ENCODE measurements at regions of chr4 and their contacts with region 1.

Region 1: GRCh38 chr4:38179690-38180377 is 219.6 kb downstream of the PTTG2 start:
- DNase-seq: peak; percentile 76
- H3K4me3 Mint-ChIP-seq: no peak overlapping the region
- H3K27ac Mint-ChIP-seq: no peak overlapping the region
- H3K4me1 Mint-ChIP-seq: peaks cover 38% of the 10 kb centered on the region
- H3K27me3 Mint-ChIP-seq: peaks cover 42% of the 10 kb centered on the region

Region 2: GRCh38 chr4:38062088-38062893 is 117.5 kb before region 1 on chr4:
- CTCF ChIA-PET with region 1: interaction called, 98 read pairs
- POLR2A ChIA-PET with region 1: interaction called, 3 read pairs
- DNase-seq: peak; percentile 72
- H3K4me3 Mint-ChIP-seq: peak overlapping the region; percentile 64
- H3K27ac Mint-ChIP-seq: peak overlapping the region; percentile 10
- H3K4me1 Mint-ChIP-seq: peaks cover 15% of the 10 kb centered on the region
- H3K27me3 Mint-ChIP-seq: no peaks in the 10 kb centered on the region

Region 3: GRCh38 chr4:38091636-38092035 is 88.2 kb before region 1 on chr4:
- CTCF ChIA-PET with region 1: interaction called, 10 read pairs
- POLR2A ChIA-PET with region 1: no interaction called
- DNase-seq: no peak
- H3K4me3 Mint-ChIP-seq: no peak overlapping the region
- H3K27ac Mint-ChIP-seq: peak overlapping the region; percentile 42
- H3K4me1 Mint-ChIP-seq: peaks cover 27% of the 10 kb centered on the region
- H3K27me3 Mint-ChIP-seq: no peaks in the 10 kb centered on the region

Region 4: DNA sequence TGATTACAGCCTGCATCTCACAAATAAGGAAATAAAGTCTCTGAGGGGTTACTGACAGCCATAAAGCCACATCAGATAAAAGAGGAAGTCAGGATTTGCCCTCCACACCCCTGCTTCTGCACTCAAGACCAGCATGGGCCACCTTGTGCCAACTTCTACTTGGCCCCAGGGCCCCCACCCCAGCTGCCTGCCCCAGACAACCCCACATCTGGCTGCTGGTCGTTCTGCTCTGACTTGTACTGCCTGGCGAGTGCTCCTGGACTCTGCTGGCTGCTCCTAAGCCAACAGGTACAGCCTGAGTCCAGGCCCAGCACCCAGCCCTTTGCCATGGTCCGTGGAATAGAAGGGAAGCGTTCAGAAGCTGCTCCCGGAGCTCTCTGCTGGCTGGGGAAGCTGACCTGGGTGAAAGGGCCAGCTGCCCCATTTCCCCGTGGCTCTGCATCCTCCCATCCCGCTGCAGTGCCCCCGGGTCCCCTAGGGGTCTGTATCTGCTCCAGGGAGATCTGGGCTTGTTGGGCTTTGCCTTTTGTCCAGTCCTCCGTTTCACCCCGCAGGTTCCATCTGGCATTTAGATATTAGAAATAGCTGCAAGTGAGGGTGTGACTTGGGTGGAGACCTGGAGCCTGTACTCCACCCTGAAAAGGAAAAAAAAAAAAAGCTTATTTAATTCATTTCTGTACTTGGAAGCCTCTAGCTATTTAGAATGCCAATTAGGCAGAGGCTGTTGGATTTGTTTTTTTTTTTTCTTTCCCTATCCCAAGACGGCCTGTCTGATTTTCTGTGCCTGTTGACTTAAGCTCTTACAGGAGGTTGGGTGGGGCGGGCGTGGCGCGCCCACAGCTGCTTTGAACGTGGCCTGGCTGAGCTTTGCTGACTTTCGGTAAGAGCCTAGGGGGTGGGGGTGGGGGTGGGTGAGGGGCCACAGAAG is 24.9 kb before region 1 on chr4:
- CTCF ChIA-PET with region 1: interaction called, 15 read pairs
- POLR2A ChIA-PET with region 1: interaction called, 13 read pairs
- DNase-seq: peak; percentile 53
- H3K4me3 Mint-ChIP-seq: peak overlapping the region; percentile 22
- H3K27ac Mint-ChIP-seq: peak overlapping the region; percentile 75
- H3K4me1 Mint-ChIP-seq: peaks cover 57% of the 10 kb centered on the region
- H3K27me3 Mint-ChIP-seq: peaks cover 6% of the 10 kb centered on the region

Region 5: DNA sequence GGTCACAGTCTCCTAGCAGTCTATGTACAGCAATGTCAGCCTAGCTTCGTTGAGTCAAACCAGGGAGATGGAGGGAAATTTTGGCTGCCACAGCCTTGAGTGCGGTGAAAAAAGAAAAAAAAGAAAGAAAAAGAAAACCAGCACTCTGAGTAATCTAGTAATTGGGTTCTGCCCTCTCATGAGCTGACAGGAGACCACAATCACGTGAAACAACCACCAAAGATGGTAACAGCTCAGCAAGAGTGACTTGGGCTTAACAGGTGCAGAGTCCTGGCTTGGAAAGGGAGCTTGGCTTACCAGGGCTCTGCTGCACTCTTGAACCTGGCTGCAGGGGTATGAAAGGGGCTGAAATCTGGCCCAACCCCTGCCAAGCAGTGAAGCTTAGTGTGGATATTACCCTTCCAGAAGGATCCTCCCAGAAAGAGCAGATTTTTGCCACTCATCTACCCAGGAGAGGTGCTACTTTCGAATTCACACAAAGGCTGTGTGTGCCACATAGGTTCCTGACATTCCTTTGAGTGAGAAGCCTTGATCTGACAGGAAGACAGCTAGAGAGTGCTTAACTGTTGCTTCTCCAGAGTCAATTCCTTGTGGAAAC is 130.7 kb after region 1 on chr4:
- CTCF ChIA-PET with region 1: interaction called, 15 read pairs
- POLR2A ChIA-PET with region 1: interaction called, 6 read pairs
- DNase-seq: peak; percentile 82
- H3K4me3 Mint-ChIP-seq: peak overlapping the region; percentile 36
- H3K27ac Mint-ChIP-seq: peak overlapping the region; percentile 80
- H3K4me1 Mint-ChIP-seq: peaks cover 68% of the 10 kb centered on the region
- H3K27me3 Mint-ChIP-seq: peaks cover 43% of the 10 kb centered on the region

Region 6: DNA sequence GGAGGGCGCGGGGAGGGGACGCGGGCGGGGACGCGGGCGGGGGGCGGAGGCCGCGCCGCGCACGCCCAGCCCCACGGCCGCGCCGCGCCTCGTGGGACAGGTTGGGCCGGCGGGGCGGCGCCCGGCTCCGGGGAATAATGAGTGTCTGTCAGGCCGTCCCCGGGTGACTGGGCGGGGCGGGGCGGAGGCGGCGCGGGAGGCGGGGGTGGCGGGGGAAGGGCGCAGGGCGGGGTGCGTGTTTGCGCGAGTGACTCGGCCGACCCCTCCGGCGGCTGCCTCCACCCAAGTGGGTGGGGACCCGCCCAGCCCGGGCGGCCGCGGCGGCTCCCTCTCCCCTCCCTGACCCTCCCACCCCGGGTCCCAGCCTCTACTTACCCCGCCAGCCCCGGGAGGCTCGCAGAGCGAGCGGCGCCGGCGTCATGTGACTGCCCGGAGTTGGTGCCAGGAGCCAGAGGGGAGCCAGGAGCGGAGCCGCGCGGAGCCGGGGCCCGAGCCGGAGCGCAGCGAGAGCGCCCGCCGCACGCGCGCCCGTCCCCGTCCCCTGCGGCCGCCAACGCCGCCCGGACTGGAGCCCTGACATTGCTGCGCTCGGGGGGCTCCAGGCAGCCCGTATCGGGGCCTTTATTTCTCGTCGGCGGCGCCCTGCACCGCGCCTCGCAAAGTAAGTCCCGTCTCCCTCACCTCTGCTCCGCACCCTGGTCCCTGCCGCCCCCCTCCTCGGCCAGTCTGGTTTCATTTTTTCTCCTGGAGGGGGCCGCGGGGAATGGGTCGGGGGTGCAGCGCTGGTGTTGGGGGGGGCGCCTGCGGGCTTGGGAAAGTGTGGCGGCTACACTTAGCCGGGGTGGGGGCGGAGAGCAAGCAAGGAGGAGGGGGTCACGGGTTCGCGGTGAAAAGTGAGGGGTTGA is 484.2 kb after region 1 on chr4 and contains the start of gene KLF3:
- CTCF ChIA-PET with region 1: interaction called, 13 read pairs
- POLR2A ChIA-PET with region 1: interaction called, 5 read pairs
- DNase-seq: peak; percentile 90
- H3K4me3 Mint-ChIP-seq: peak within 1 kb of the TSS; percentile 85
- H3K27ac Mint-ChIP-seq: peak within 1 kb of the TSS; percentile 64
- H3K4me1 Mint-ChIP-seq: peaks cover 48% of the 10 kb centered on the region
- H3K27me3 Mint-ChIP-seq: peaks cover 42% of the 10 kb centered on the region
- total RNA-seq, gene KLF3: 21.9 to 22.1 TPM

Region 7: DNA sequence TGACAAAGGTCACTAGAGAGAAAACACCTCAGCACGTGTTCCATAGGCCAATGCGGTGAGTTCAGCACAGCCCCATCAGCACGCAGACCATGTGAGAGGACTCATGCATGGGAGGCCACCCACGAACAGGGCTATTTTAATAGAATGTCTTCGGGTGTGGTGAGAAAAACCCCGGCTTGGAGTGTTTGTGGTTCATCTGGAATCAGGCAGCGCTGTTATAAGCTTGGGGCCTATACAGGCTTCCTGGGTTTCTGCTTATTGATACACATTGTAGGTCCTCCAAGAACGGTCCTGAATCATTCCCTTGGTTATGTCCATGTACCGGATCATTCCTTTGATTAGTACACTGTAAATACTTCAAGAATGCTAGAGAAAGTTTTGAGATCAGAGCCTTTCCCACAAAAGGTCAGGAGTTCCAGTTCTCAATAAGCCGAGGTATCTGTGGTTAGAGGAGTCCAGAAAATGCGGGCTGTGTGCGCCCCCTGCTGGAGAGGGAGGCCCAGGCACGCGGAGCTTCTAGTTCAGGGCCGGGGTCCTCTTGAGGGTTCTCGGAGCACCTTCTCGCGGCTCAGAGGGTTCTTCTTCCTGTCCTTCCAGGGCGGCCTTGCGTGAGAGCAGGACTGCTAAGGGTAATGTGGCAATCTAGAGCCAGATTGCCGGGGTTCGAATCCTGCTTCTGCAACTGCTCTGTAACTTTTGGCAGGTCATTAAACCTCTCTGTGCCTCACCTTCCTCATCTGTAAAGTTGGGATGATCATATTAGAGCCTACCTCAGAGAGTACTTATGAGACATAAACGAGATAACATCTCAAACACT is 551.2 kb after region 1 on chr4:
- CTCF ChIA-PET with region 1: interaction called, 63 read pairs
- POLR2A ChIA-PET with region 1: interaction called, 4 read pairs
- DNase-seq: peak; percentile 80
- H3K4me3 Mint-ChIP-seq: no peak overlapping the region
- H3K27ac Mint-ChIP-seq: no peak overlapping the region
- H3K4me1 Mint-ChIP-seq: peaks cover 19% of the 10 kb centered on the region
- H3K27me3 Mint-ChIP-seq: peaks cover 23% of the 10 kb centered on the region